Posterior cingulate gyrus (tissue), 11 donors: ENCODE measurements at regions of chr5 and their contacts with region 1.

Region 1: DNA sequence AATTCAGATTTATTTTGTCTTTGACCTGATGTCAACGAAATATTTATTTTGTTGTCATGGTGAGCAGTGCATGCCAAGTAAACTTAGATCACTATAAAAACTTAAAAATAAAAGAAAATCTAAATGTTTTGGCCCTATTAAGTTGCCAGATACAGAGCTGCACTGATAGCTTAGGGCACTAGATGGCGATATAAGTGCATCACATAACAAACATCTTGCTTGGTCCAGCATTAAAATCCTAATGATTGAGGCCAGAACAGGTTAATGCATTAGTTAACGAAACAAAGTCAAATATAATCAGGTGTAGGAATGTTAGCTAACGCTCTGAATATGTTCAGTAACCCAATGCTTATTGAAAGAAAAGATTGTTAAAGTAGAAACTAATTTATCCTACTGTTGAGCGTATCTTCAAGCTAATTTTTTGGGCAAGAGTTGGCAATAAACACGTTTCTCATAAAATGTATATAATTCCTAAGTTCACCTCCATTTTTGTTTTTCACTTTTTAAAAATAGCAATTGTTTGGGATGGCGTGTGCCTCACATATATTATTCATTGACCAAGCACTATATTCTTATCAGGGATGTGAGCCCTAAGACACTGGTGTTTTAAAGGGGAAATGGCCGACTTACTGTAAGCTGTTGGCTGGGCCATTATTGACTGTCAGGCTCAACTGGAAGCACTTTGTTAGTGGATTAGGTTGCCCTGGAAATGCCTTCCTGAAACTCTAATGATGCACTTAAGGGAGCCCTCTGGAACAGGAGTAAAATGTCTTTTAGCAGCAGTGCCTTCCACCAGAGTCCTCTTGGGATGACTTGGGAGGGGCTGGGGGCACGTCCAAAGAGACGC is 33.3 kb downstream of the KCTD16 start:
- DNase-seq: peak in 3 of 10 donors; percentile 18 to 31 (median 28)

Region 2: DNA sequence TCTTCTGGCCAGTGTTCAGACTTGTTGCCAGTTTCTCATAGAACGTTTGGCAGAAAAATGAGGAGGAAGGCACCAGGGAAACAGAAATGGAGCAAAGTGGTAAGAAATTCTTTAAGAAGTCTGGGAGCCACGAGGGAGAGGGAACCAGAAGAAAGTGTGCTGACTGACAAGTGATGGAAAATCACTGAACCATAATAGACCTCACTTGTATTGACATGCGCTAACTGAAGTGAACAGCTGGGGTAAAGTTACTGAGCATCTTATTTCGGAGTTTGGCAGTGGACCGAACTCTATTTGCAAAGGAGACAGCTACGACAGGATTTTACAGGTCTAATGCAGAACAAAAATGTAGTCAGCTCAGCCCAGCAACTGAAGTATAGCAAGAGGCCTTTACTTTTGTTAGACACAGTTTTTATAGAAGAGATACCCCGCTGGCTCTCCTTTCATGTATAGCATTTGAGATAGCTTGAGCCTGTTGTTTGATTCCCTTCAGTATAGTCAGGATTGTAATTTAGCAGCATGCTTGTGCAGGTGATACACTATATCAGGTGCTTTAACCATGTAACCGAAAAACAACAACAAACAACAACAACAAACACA is 338.4 kb before region 1 on chr5:
- intact Hi-C with region 1: no loop called
- DNase-seq: no peak

Region 3: DNA sequence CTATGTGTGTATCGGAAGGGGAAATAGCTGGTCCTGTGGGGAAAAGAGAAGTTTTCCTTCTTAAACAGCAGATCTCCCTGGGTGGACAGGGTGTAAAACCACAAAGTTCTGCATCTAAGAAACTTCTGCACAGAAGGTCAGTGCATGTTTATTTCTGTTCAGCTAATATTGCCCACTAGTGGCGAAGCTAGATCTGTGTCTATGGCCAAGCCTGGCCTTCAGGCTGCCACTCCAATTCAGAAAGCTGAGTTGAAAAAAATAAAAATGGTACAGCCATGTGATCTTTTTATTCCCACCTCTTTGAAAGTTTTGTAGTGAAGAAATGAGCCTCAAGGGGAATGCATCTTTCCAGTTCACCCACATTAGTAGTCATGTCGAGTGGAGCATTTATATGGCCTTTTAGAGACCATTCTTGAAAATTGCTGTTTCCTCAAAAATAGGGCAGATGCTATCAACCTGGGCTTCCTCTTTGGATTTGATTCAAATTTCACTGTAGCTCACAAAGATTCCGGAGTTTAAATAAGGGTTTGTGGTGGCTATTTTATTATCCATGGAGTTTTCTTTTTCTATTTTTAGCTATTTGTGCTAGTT is 1143.1 kb after region 1 on chr5:
- intact Hi-C with region 1: loop called (anchors 10 kb)
- DNase-seq: peak in 1 of 10 donors; percentile 66

Region 4: DNA sequence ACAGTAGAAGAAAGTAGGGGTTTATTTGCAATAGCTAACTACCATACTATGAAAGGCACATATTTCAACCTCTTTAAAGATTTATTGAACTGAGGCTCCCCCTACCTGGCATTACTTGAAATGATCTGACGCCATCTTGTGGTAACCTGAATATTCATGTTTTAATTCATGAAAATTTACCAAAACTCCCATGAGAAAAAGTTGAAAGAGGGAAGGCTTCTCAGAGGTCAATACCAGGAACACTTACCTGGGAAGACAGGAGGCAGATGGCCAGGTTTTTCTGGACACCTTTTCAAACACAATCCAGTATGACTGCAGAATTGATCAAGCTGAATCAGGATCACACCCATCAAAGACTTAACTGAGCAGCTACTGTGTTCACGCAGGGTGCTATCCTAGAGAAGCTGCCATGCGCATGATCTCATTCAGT is 1621.8 kb after region 1 on chr5:
- intact Hi-C with region 1: loop called (anchors 1 kb)
- DNase-seq: no peak

Region 5: DNA sequence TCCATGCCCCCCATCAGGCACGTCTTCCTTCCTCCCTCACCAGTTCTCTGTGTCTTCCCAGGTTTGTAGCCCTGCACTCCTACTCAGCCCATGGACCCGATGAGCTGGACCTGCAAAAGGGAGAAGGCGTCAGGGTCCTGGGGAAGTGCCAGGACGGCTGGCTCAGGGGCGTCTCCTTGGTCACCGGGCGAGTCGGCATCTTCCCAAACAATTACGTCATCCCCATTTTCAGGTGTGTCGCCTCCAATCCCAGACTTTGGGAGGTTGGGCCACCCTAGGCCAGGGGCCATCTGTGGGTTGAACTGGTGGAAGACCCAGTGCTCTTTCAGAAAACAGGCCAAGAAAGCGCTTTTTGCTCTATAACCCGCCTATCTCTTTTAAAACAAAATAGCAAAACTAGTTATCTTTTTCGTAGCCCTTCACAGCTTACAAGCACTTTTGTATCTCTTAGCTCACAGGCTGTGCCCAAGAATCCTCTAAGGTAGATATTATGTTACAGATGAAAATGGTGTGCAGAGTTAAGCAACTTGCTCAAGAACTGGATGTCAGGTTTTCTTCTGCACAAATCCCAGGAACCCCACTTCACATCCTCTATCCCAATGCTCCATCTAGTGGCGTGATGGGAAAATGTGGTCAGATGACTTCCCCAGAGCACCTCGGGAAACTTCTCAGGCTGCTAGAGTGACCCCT is 1845.2 kb after region 1 on chr5:
- intact Hi-C with region 1: loop called (anchors 2 kb)
- DNase-seq: peak in 4 of 10 donors; percentile 44 to 58 (median 50)

Region 6: GRCh38 chr5:146130440-146131045 is 1926.6 kb after region 1 on chr5:
- intact Hi-C with region 1: loop called (anchors 2 kb)
- DNase-seq: no peak